ENCODE measurements at regions of chr3 and their contacts with region 1.

Region 1: DNA sequence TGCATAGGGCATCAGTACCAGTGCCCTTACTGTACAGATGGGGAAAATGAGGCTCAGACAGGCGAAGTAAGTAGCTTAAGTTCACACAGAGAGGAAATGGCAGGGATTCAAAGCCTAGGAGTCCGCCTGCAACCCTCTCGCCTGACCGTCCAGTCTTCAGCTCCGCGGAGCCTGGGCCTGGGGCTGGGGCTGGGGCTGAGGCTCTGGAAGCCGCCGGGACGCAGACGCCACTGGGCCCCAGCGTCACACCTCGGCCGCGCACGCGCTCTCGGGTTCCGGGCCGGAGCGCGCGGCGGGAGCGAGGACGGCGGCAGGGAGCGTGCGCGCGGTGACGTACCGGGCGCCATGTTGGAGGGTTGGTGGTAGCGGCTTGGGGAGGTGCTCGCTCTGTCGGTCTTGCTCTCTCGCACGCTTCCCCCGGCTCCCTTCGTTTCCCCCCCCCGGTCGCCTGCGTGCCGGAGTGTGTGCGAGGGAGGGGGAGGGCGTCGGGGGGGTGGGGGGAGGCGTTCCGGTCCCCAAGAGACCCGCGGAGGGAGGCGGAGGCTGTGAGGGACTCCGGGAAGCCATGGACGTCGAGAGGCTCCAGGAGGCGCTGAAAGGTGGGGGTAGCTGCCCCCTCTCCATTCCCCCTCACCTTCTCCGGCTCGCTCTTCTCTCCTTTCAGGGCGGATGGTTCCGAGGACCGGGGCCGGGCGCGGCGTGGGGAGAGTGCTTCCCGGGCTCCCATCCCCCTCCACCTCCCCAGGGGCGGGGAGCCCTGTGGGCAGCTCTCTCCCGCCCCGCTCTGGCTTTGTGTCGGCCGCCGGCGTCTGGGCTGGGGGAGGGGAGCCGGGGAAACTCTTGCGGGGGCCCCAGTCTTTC is at the start of gene PPP4R2:
- DNase-seq: peak; percentile 93
- ATAC-seq: peak; percentile 82
- H3K4me3 ChIP-seq: peak within 1 kb of the TSS; percentile 85
- H3K27ac ChIP-seq: peak within 1 kb of the TSS; percentile 75
- H3K4me1 ChIP-seq: peaks cover 28% of the 10 kb centered on the region
- H3K27me3 ChIP-seq: no peaks in the 10 kb centered on the region
- CTCF ChIP-seq: no peak
- total RNA-seq, gene PPP4R2: 40.5 and 62.7 TPM in 2 replicates

Region 2: DNA sequence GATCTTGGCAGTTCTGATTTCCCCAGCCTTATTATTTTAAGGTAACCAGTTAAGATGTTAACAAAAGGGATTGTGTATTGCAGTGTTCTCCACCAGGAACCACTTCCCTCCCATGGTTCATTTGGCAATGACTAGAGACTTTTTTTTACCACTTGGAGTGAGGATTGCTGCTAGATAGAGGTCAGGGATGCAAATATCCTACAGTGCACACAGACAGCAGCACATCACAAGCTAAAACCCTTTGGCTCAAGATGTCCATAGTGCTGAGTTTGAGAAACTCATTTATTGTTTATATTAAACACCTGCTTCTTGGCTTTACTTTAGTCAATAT is 40.6 kb after region 1 on chr3:
- CTCF ChIA-PET with region 1: no interaction called
- POLR2A ChIA-PET with region 1: no interaction called
- intact Hi-C with region 1: loop called (anchors 5 kb)
- DNase-seq: peak; percentile 14
- ATAC-seq: peak; percentile 66
- H3K4me3 ChIP-seq: no peak overlapping the region
- H3K27ac ChIP-seq: peak overlapping the region; percentile 28
- H3K4me1 ChIP-seq: peaks cover 22% of the 10 kb centered on the region
- H3K27me3 ChIP-seq: no peaks in the 10 kb centered on the region
- CTCF ChIP-seq: no peak

Measured in PC-3 (cell line).